ENCODE measurements at regions of chr20 and their contacts with region 1.

Region 1: GRCh38 chr20:35954200-35954906 is at the start of gene SCAND1:
- DNase-seq: peak; percentile 99
- ATAC-seq: peak; percentile 87
- H3K4me3 ChIP-seq: peak within 1 kb of the TSS; percentile 72 to 96 (median 91)
- H3K4me3 Mint-ChIP-seq: peak within 1 kb of the TSS; percentile 100
- H3K27ac ChIP-seq: peak within 1 kb of the TSS; percentile 98 to 99
- H3K27ac Mint-ChIP-seq: peak within 1 kb of the TSS; percentile 100
- H3K4me1 ChIP-seq: peaks cover 17 to 24% of the 10 kb centered on the region in 2 donors
- H3K4me1 Mint-ChIP-seq: peaks cover 22% of the 10 kb centered on the region
- H3K27me3 ChIP-seq: no peaks in the 10 kb centered on the region
- H3K27me3 Mint-ChIP-seq: no peaks in the 10 kb centered on the region
- CTCF ChIP-seq: peak; percentile 97
- total RNA-seq, gene SCAND1: 40.8 and 42.0 TPM in 2 replicates

Region 2: DNA sequence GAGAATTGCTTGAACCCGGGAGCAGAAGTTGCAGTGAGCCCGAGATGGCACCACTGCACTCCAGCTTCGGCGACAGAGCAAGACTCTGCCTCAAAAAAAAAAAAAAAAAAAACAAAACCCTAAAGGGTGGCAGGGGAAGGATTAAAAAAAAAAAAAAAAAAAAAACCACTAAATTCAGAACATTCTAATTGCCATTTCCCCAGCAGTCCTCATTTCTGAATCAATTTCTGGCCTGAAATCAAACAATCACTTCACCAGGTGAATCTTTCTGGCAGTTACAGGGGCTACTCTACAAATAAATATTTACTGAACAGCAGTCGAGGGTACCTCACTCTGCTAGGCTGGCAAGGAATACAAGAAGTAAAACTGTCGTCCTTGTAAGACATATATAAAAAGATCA is 543.7 kb before region 1 on chr20:
- CTCF ChIA-PET with region 1: no interaction called
- POLR2A ChIA-PET with region 1: interaction called, 8 read pairs
- intact Hi-C with region 1: loop called (anchors 5 kb)
- DNase-seq: no peak
- ATAC-seq: no peak
- H3K4me3 ChIP-seq: no peak overlapping the region
- H3K4me3 Mint-ChIP-seq: peak overlapping the region; percentile 99
- H3K27ac ChIP-seq: no peak overlapping the region
- H3K27ac Mint-ChIP-seq: peak overlapping the region; percentile 99
- H3K4me1 ChIP-seq: peaks cover 9 to 15% of the 10 kb centered on the region in 2 donors
- H3K4me1 Mint-ChIP-seq: peaks cover 24% of the 10 kb centered on the region
- H3K27me3 ChIP-seq: no peaks in the 10 kb centered on the region
- H3K27me3 Mint-ChIP-seq: peaks cover 4% of the 10 kb centered on the region
- CTCF ChIP-seq: no peak

Region 3: DNA sequence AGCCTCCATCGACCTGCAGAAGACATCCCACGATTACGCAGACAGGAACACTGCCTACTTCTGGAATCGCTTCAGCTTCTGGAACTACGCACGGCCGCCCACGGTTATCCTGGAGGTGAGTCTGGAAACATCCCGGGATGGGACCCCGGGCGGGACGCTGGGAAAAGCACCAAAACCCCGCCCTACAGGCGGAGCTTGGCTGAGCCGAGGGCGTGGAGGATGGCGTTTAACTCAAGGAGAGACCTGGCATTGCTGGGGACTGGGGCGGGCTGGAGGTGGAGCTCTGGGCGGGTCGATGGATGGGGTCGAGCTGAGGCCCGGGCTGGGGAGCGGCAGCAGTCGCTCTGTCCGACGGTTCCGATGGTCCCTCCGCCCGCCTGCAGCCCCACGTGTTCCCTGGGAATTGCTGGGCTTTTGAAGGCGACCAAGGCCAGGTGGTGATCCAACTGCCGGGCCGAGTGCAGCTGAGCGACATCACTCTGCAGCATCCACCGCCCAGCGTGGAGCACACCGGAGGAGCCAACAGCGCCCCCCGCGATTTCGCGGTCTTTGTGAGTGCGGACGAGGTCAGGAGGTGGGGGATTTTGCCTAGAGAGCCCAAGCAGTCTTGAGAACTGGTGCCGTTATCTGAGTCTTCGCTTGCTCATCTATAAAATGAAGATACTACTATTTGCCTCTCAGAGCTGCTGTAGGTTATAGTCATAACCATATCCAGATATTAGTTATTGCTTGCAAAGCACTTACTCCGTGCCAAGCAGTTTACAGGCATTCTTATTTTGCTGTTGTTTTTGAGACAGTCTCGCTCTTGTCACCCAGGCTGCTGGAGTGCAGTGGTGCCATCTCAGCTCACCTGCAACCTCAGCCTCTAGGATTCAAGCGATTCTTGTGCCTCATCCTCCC is 334.9 kb before region 1 on chr20:
- CTCF ChIA-PET with region 1: no interaction called
- POLR2A ChIA-PET with region 1: interaction called, 3 read pairs
- intact Hi-C with region 1: loop called (anchors 1 kb)
- DNase-seq: peak; percentile 90
- ATAC-seq: peak; percentile 18
- H3K4me3 ChIP-seq: peak overlapping the region; percentile 28 to 72 (median 55)
- H3K4me3 Mint-ChIP-seq: peak overlapping the region; percentile 95
- H3K27ac ChIP-seq: no peak overlapping the region
- H3K27ac Mint-ChIP-seq: peak overlapping the region; percentile 78
- H3K4me1 ChIP-seq: peaks cover 23 to 39% of the 10 kb centered on the region in 2 donors
- H3K4me1 Mint-ChIP-seq: peaks cover 36% of the 10 kb centered on the region
- H3K27me3 ChIP-seq: peaks cover 0 to 5% (median 2%) of the 10 kb centered on the region in 4 experiments
- H3K27me3 Mint-ChIP-seq: no peaks in the 10 kb centered on the region
- CTCF ChIP-seq: peak; percentile 84

Region 4: GRCh38 chr20:35771689-35772562 is 182.4 kb before region 1 on chr20 and contains the start of gene PHF20:
- CTCF ChIA-PET with region 1: interaction called, 12 read pairs
- POLR2A ChIA-PET with region 1: interaction called, 7 read pairs
- intact Hi-C with region 1: no loop called
- DNase-seq: peak; percentile 100
- ATAC-seq: peak; percentile 80
- H3K4me3 ChIP-seq: peak within 1 kb of the TSS; percentile 67 to 98 (median 89)
- H3K4me3 Mint-ChIP-seq: peak within 1 kb of the TSS; percentile 88
- H3K27ac ChIP-seq: peak within 1 kb of the TSS; percentile 95 to 99
- H3K27ac Mint-ChIP-seq: peak within 1 kb of the TSS; percentile 99
- H3K4me1 ChIP-seq: peaks cover 80 to 88% of the 10 kb centered on the region in 2 donors
- H3K4me1 Mint-ChIP-seq: peaks cover 72% of the 10 kb centered on the region
- H3K27me3 ChIP-seq: no peaks in the 10 kb centered on the region
- H3K27me3 Mint-ChIP-seq: no peaks in the 10 kb centered on the region
- CTCF ChIP-seq: no peak
- total RNA-seq, gene PHF20: 92.3 and 101 TPM in 2 replicates

Region 5: GRCh38 chr20:35917077-35917476 is 37.3 kb before region 1 on chr20:
- CTCF ChIA-PET with region 1: no interaction called
- POLR2A ChIA-PET with region 1: no interaction called
- intact Hi-C with region 1: no loop called
- DNase-seq: no peak
- ATAC-seq: no peak
- H3K4me3 ChIP-seq: no peak overlapping the region
- H3K4me3 Mint-ChIP-seq: no peak overlapping the region
- H3K27ac ChIP-seq: no peak overlapping the region
- H3K27ac Mint-ChIP-seq: no peak overlapping the region
- H3K4me1 ChIP-seq: no peaks in the 10 kb centered on the region
- H3K4me1 Mint-ChIP-seq: no peaks in the 10 kb centered on the region
- H3K27me3 ChIP-seq: no peaks in the 10 kb centered on the region
- H3K27me3 Mint-ChIP-seq: no peaks in the 10 kb centered on the region
- CTCF ChIP-seq: no peak

Region 6: DNA sequence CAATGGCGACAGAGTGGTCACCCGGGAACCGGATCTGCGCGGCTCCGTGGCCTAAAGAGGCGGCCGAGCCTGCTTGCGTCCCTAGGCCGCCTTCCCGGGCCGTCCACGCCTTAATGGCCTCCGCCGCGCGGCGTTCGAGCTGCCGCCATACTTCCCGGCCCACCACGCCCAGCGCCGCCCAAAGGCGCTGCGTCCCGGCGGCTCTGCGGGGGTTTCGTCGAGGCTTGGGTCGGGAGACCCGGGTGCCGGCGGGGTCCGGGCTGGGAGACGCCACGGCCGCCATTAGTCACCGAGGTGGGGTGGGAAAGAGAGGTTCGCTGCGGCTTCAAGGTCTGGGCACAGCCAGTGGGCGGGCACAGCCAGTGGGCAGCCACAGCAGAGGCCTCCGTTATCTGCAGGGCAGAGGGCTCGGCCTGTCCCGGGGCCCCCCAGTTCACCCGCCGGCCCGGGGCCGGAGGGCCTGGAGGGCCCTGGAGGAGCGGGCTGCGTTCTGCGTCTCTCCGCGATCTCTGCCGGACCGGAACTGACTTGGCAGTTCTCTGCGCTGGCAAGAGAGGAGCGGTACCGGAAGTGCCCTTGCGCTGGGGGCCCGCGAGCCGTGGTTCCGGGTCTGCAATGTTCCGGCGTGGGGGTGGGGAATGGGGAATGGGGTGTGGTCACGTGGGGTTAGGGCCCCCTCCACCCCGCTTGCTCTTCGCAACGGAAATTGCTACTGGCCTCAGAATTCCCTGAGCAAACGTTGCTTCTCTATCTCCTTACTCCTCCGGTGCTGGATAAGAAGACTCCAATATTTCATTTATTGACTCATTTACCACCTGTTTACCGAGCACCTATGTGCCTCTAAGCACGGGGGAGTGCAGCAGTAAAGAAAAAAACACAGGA is 96.3 kb after region 1 on chr20:
- CTCF ChIA-PET with region 1: no interaction called
- POLR2A ChIA-PET with region 1: no interaction called
- intact Hi-C with region 1: loop called (anchors 1 kb)
- DNase-seq: peak; percentile 88
- ATAC-seq: peak; percentile 93
- H3K4me3 ChIP-seq: peak overlapping the region; percentile 68 to 99 (median 96)
- H3K4me3 Mint-ChIP-seq: peak overlapping the region; percentile 93
- H3K27ac ChIP-seq: peak overlapping the region; percentile 91 to 95
- H3K27ac Mint-ChIP-seq: peak overlapping the region; percentile 94
- H3K4me1 ChIP-seq: peaks cover 11 to 12% of the 10 kb centered on the region in 2 donors
- H3K4me1 Mint-ChIP-seq: peaks cover 45% of the 10 kb centered on the region
- H3K27me3 ChIP-seq: no peaks in the 10 kb centered on the region
- H3K27me3 Mint-ChIP-seq: peaks cover 11% of the 10 kb centered on the region
- CTCF ChIP-seq: no peak

Region 7: DNA sequence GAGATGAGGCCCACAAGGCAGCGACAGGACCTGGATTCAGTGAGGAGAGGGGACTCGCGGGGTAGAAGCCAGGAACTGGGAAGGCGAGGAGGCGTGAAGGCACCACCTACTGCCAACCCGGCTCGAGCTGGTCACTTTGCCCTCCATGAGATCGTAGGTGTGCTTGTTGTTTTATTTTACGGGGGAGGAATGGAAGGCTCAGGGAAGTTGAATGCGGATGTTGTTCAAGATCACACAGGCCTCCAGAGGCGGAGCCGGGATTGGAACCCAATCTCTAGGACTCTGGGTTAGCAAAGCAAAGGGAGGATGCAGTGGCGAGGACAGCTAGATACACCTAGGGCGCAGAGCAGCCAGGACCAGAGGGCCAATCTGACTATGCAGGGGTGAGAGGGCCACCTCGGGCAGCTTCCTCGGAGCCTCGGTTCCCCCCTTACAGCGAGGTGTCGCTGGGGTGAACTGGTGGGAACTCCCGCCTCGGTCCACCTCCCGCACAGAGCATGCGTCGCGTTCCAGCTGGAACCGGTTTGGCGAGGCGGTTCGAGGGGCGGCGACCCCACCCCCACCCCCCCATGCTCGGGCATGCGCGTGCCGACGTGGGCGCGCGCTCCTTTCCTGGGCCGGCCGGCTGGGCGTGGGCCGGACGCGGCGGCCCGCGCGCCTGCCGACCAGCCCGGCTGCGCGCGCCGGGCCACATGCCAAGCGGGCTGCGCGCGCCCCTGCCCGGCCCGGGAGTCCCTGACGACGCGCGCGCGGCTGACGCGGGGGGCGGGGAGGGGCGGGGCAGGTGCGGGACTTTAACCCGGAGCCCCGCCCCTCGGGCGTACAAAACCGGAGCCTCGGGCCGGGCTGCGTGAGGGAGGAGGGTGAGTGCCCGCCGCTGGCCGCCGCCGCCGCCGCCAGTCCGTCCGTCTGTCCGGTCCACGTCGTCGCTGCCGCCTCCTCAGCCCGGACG is 506.6 kb after region 1 on chr20:
- CTCF ChIA-PET with region 1: no interaction called
- POLR2A ChIA-PET with region 1: no interaction called
- intact Hi-C with region 1: loop called (anchors 2 kb)
- DNase-seq: peak; percentile 97
- ATAC-seq: peak; percentile 80
- H3K4me3 ChIP-seq: peak overlapping the region; percentile 40 to 79 (median 47)
- H3K4me3 Mint-ChIP-seq: peak overlapping the region; percentile 81
- H3K27ac ChIP-seq: peak overlapping the region; percentile 96 to 98
- H3K27ac Mint-ChIP-seq: peak overlapping the region; percentile 91
- H3K4me1 ChIP-seq: peaks cover 42 to 49% of the 10 kb centered on the region in 2 donors
- H3K4me1 Mint-ChIP-seq: peaks cover 46% of the 10 kb centered on the region
- H3K27me3 ChIP-seq: no peaks in the 10 kb centered on the region
- H3K27me3 Mint-ChIP-seq: no peaks in the 10 kb centered on the region
- CTCF ChIP-seq: no peak